MCF 10A (cell line): ENCODE measurements at regions of chr5 and their contacts with region 1.

Region 1: DNA sequence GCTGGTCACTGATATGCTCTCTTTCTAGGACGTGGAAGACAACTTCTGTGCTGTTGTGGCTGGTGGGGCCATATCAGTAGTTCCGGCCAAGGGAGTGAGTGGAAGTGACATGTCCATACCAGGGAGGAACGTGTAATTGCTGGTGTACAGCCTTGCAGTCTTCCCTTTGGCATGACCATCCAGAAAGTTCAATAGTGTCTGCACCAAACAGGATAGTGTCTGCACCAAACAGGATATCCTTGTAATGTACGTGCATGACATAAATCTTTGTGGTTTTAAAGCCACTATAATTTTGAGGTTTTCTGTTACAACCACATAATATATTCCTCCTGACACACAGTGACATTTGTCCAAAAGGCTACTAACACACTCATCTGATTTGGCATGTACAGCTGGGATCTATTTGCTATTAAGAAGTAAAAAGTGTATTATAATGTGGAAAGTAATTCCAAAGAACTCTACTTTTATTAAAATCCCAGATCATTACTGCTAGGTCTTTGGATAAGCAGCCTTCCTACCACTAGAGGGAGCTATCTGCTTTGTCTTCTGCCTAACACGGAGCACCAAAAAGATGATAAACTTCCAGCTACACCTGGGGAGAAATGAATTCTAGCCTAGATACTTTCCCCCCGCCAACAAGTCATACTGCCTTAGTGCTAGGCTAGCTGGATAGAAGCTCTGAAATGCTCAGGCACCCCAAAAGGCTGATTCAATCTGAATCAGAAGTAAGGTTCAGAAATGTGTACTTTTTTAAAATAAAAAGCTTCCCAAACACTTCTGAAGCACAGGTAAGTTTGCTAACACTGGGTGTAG is 52.7 kb downstream of the RNF145 start:
- DNase-seq: peak; percentile 87
- H3K4me3 Mint-ChIP-seq: no peak overlapping the region
- H3K27ac Mint-ChIP-seq: peak overlapping the region; percentile 28
- H3K4me1 Mint-ChIP-seq: peaks cover 12% of the 10 kb centered on the region
- H3K27me3 Mint-ChIP-seq: no peaks in the 10 kb centered on the region
- CTCF ChIP-seq: peak; percentile 88

Region 2: GRCh38 chr5:159170021-159170420 is 13.4 kb after region 1 on chr5:
- CTCF ChIA-PET with region 1: interaction called, 14 read pairs
- POLR2A ChIA-PET with region 1: interaction called, 6 read pairs
- intact Hi-C with region 1: no loop called
- DNase-seq: no peak
- H3K4me3 Mint-ChIP-seq: no peak overlapping the region
- H3K27ac Mint-ChIP-seq: no peak overlapping the region
- H3K4me1 Mint-ChIP-seq: peaks cover 16% of the 10 kb centered on the region
- H3K27me3 Mint-ChIP-seq: no peaks in the 10 kb centered on the region
- CTCF ChIP-seq: no peak

Region 3: DNA sequence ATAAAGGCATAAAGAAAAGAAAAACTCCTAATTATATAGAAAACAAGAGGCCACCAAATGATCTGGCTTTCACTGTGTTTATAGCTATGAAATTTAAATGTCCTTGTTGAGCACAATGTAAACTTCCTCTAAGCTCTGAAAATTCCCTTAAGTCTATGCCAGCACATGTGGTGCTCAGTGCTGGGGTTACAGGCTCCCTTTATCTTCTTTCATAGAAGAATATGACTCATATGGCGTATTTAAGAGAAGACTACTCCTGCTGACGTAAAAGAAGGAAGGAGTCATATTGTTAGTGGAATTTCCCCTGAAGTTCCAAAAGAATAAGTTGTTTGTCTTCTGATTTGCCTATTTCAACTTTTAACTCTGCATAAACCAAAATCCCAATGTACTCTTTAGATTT is 22.3 kb after region 1 on chr5:
- CTCF ChIA-PET with region 1: interaction called, 10 read pairs
- POLR2A ChIA-PET with region 1: interaction called, 25 read pairs
- intact Hi-C with region 1: no loop called
- DNase-seq: peak; percentile 95
- H3K4me3 Mint-ChIP-seq: peak overlapping the region; percentile 54
- H3K27ac Mint-ChIP-seq: peak overlapping the region; percentile 96
- H3K4me1 Mint-ChIP-seq: peaks cover 77% of the 10 kb centered on the region
- H3K27me3 Mint-ChIP-seq: no peaks in the 10 kb centered on the region
- CTCF ChIP-seq: no peak

Region 4: GRCh38 chr5:159184858-159185381 is 28.3 kb after region 1 on chr5:
- CTCF ChIA-PET with region 1: interaction called, 23 read pairs
- POLR2A ChIA-PET with region 1: interaction called, 25 read pairs
- intact Hi-C with region 1: no loop called
- DNase-seq: peak; percentile 77
- H3K4me3 Mint-ChIP-seq: peak overlapping the region; percentile 48
- H3K27ac Mint-ChIP-seq: peak overlapping the region; percentile 96
- H3K4me1 Mint-ChIP-seq: peaks cover 81% of the 10 kb centered on the region
- H3K27me3 Mint-ChIP-seq: no peaks in the 10 kb centered on the region
- CTCF ChIP-seq: no peak

Region 5: GRCh38 chr5:159198063-159199036 is 41.7 kb after region 1 on chr5:
- CTCF ChIA-PET with region 1: interaction called, 24 read pairs
- POLR2A ChIA-PET with region 1: interaction called, 15 read pairs
- intact Hi-C with region 1: no loop called
- DNase-seq: no peak
- H3K4me3 Mint-ChIP-seq: no peak overlapping the region
- H3K27ac Mint-ChIP-seq: no peak overlapping the region
- H3K4me1 Mint-ChIP-seq: peaks cover 61% of the 10 kb centered on the region
- H3K27me3 Mint-ChIP-seq: no peaks in the 10 kb centered on the region
- CTCF ChIP-seq: no peak

Region 6: GRCh38 chr5:159286420-159287035 is 129.9 kb after region 1 on chr5:
- CTCF ChIA-PET with region 1: interaction called, 16 read pairs
- POLR2A ChIA-PET with region 1: interaction called, 4 read pairs
- intact Hi-C with region 1: no loop called
- DNase-seq: peak; percentile 62
- H3K4me3 Mint-ChIP-seq: no peak overlapping the region
- H3K27ac Mint-ChIP-seq: no peak overlapping the region
- H3K4me1 Mint-ChIP-seq: no peaks in the 10 kb centered on the region
- H3K27me3 Mint-ChIP-seq: no peaks in the 10 kb centered on the region
- CTCF ChIP-seq: peak; percentile 67